CD8-positive, alpha-beta T cell (primary cell): ENCODE measurements at regions of chr9 and their contacts with region 1.

Region 1: DNA sequence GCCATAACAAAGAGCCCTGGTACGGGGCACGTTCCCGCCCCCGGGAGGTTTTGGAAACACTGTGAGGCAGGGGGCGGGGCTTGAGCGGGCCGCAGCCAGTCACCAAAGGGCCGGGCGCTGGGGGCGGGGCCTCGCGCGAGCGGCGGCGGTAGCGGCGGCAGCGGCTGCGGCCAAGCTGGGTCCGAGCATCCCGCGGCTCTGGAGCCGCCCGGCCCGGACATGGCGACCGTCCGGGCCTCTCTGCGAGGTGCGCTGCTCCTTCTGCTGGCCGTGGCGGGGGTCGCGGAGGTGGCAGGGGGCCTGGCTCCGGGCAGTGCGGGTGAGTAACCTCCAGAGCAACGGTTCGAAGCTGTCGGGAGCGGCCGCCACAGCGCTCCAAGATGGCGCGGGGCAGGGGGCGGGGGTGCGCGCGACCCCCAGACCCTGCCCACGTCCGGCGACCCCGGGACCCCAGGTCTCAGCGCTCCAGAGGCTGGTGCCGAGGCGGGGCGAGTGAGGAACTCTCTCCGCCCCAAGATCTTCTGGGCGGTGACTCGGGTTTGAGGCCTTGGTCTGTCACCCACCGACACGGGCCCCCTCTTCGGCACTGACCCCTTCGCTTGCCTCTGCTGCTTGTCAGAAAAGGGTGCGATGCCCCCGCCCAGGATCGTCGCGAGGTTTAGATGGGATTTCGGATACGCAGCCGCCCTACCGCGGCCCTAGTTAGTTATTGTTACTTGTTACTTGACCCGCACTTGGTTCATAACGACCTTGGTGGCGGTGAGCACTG is at the start of gene RECK:
- DNase-seq: peak; percentile 63 to 90 (median 85)
- ATAC-seq: peak; percentile 96
- H3K4me3 ChIP-seq: peak within 1 kb of the TSS; percentile 71 to 77
- H3K4me3 Mint-ChIP-seq: peak within 1 kb of the TSS; percentile 86
- H3K27ac ChIP-seq: peak within 1 kb of the TSS; percentile 16 to 37
- H3K27ac Mint-ChIP-seq: peak within 1 kb of the TSS; percentile 78
- H3K4me1 ChIP-seq: peaks cover 32% of the 10 kb centered on the region
- H3K4me1 Mint-ChIP-seq: peaks cover 43% of the 10 kb centered on the region
- H3K27me3 ChIP-seq: no peaks in the 10 kb centered on the region
- H3K27me3 Mint-ChIP-seq: peaks cover 3% of the 10 kb centered on the region
- CTCF ChIP-seq: no peak
- total RNA-seq, gene RECK: 5.0 to 6.3 TPM

Region 2: GRCh38 chr9:34458013-34458958 is 1578.7 kb before region 1 on chr9 and contains the starts of genes DNAI1 and FAM219A:
- CTCF ChIA-PET with region 1: no interaction called
- POLR2A ChIA-PET with region 1: no interaction called
- intact Hi-C with region 1: loop called in 1 of 2 experiments (anchors 5 kb)
- DNase-seq: peak; percentile 98 to 99 (median 99)
- ATAC-seq: peak; percentile 96
- H3K4me3 ChIP-seq: peak within 1 kb of the TSS; percentile 61 to 67
- H3K4me3 Mint-ChIP-seq: peak within 1 kb of the TSS; percentile 91
- H3K27ac ChIP-seq: peak within 1 kb of the TSS in 1 of 2 experiments; percentile 29
- H3K27ac Mint-ChIP-seq: peak within 1 kb of the TSS; percentile 46
- H3K4me1 ChIP-seq: peaks cover 14% of the 10 kb centered on the region
- H3K4me1 Mint-ChIP-seq: peaks cover 30% of the 10 kb centered on the region
- H3K27me3 ChIP-seq: no peaks in the 10 kb centered on the region
- H3K27me3 Mint-ChIP-seq: no peaks in the 10 kb centered on the region
- CTCF ChIP-seq: no peak
- total RNA-seq, gene DNAI1: not detected
- total RNA-seq, gene FAM219A: 5.5 to 5.9 TPM

Region 3: GRCh38 chr9:35161713-35162604 is 875.0 kb before region 1 on chr9 and contains the start of gene UNC13B:
- CTCF ChIA-PET with region 1: no interaction called
- POLR2A ChIA-PET with region 1: no interaction called
- intact Hi-C with region 1: loop called in 1 of 2 experiments (anchors 10 kb)
- DNase-seq: peak; percentile 21 to 84 (median 70)
- ATAC-seq: peak; percentile 92
- H3K4me3 ChIP-seq: peak within 1 kb of the TSS; percentile 85 to 89
- H3K4me3 Mint-ChIP-seq: peak within 1 kb of the TSS; percentile 92
- H3K27ac ChIP-seq: peak within 1 kb of the TSS in 1 of 2 experiments; percentile 1
- H3K27ac Mint-ChIP-seq: peak within 1 kb of the TSS; percentile 19
- H3K4me1 ChIP-seq: peaks cover 8% of the 10 kb centered on the region
- H3K4me1 Mint-ChIP-seq: peaks cover 20% of the 10 kb centered on the region
- H3K27me3 ChIP-seq: no peaks in the 10 kb centered on the region
- H3K27me3 Mint-ChIP-seq: peaks cover 7% of the 10 kb centered on the region
- CTCF ChIP-seq: no peak
- total RNA-seq, gene UNC13B: 0.14 to 0.76 TPM

Region 4: GRCh38 chr9:36023260-36024048 is 13.5 kb before region 1 on chr9:
- CTCF ChIA-PET with region 1: interaction called, 44 read pairs
- POLR2A ChIA-PET with region 1: interaction called, 3 read pairs
- intact Hi-C with region 1: no loop called
- DNase-seq: peak; percentile 42 to 78 (median 65)
- ATAC-seq: peak; percentile 88
- H3K4me3 ChIP-seq: no peak overlapping the region
- H3K4me3 Mint-ChIP-seq: no peak overlapping the region
- H3K27ac ChIP-seq: no peak overlapping the region
- H3K27ac Mint-ChIP-seq: no peak overlapping the region
- H3K4me1 ChIP-seq: no peaks in the 10 kb centered on the region
- H3K4me1 Mint-ChIP-seq: peaks cover 2% of the 10 kb centered on the region
- H3K27me3 ChIP-seq: no peaks in the 10 kb centered on the region
- H3K27me3 Mint-ChIP-seq: peaks cover 5% of the 10 kb centered on the region
- CTCF ChIP-seq: peak; percentile 88

Region 5: DNA sequence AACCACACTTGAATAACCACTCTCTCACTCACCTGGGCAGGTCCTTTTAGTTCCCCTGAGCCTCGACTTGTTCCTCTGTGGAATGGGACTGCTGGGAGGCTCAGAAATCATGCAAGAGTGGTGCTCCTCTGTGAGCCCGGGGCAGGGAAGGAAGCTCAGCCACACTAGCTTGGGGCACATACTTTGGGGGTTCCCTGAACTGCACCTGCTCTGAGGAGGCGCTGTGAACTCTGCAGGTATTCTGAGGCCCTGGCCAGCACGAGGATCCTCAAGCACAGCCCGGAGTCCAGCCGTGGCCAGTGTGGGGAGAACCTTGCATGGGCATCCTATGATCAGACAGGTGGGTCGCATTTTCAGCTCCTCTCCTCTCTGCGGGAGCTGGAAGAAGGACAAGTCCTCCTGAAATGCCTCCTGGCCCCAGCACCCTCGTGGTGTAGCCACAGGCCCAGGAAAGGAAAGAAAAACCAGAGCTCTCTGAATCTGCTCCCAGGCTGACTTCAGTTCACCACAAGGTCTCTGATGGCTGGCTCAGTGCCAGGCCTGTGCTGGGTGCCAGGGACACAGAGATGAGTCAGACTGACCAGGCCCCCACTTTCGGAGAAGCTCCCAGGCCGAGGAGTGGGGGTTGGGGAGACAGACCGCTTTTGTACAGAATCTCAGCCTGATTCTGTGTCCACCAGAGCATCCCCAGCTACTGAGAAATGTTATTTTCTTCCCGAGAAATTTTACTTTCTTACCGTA is 111.5 kb after region 1 on chr9:
- CTCF ChIA-PET with region 1: no interaction called
- POLR2A ChIA-PET with region 1: interaction called, 3 read pairs
- intact Hi-C with region 1: loop called in 1 of 2 experiments (anchors 10 kb)
- DNase-seq: peak; percentile 44 to 89 (median 79)
- ATAC-seq: peak; percentile 6
- H3K4me3 ChIP-seq: no peak overlapping the region
- H3K4me3 Mint-ChIP-seq: peak overlapping the region; percentile 8
- H3K27ac ChIP-seq: peak overlapping the region in 1 of 2 experiments; percentile 28
- H3K27ac Mint-ChIP-seq: peak overlapping the region; percentile 71
- H3K4me1 ChIP-seq: peaks cover 90% of the 10 kb centered on the region
- H3K4me1 Mint-ChIP-seq: peaks cover 87% of the 10 kb centered on the region
- H3K27me3 ChIP-seq: no peaks in the 10 kb centered on the region
- H3K27me3 Mint-ChIP-seq: no peaks in the 10 kb centered on the region
- CTCF ChIP-seq: no peak